ENCODE measurements at regions of chr1 and their contacts with region 1.

Region 1: GRCh38 chr1:16078925-16079656 is 5.6 kb upstream of the FAM131C start:
- DNase-seq: peak; percentile 84
- H3K4me3 ChIP-seq: peak overlapping the region in 1 of 2 experiments; percentile 18; a peak in 1 of 4 replicates
- H3K27ac ChIP-seq: no peak overlapping the region; a peak in 1 of 4 replicates
- H3K4me1 ChIP-seq: peaks cover 15 to 17% of the 10 kb centered on the region in 2 experiments; a peak in 3 of 4 replicates
- H3K27me3 ChIP-seq: no peaks in the 10 kb centered on the region
- CTCF ChIP-seq: peak; percentile 93
- EP300 ChIP-seq: no peak
- RAD21 ChIP-seq: peak; percentile 98

Region 2: DNA sequence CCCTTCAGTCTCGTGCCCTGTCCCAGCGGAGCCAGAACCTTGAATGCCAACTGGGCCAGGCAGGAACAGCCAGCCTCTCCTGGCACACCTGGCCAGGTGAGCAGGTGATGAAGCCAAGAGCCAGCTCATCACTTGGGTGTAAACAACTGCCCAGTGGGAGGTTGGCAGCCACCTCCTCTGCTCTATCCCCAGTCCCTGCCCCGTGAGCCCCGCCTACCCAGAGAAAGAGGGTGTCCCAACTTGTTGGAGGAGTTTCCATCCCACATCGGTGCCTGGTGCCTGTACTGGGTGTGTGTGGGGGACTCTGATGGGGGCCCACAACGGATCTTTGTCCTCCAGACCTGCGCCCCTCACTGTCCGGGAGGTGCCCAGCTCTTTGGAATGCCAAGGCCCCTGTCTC is 12.2 kb after region 1 on chr1:
- CTCF ChIA-PET with region 1: interaction called, 22 read pairs
- POLR2A ChIA-PET with region 1: no interaction called
- DNase-seq: no peak
- H3K4me3 ChIP-seq: no peak overlapping the region
- H3K27ac ChIP-seq: no peak overlapping the region
- H3K4me1 ChIP-seq: peaks cover 0 to 3% of the 10 kb centered on the region in 2 experiments; a peak in 1 of 4 replicates
- H3K27me3 ChIP-seq: no peaks in the 10 kb centered on the region
- CTCF ChIP-seq: no peak
- EP300 ChIP-seq: no peak
- RAD21 ChIP-seq: no peak

Region 3: DNA sequence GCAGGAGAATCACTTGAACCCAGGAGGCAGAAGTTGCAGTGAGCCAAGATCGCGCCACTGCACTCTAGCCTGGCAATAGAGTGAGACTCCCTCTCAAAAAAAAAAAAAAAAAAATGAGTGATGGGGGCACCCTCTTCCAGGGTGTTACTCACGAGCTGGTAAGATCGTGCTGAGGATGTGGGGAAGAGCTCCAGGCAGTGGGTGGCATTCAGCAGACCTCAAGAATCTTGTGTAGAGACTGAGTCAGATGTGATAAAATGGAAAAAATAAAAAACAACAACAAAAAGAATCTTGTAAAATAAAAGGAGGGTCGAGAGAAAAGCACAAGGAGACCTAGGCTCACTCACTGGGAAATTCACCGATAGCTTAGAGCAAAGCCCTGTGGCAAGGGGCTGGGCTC is 38.3 kb after region 1 on chr1:
- CTCF ChIA-PET with region 1: interaction called, 13 read pairs
- POLR2A ChIA-PET with region 1: no interaction called
- DNase-seq: no peak
- H3K4me3 ChIP-seq: no peak overlapping the region
- H3K27ac ChIP-seq: no peak overlapping the region
- H3K4me1 ChIP-seq: peaks cover 10 to 14% of the 10 kb centered on the region in 2 experiments; a peak in 3 of 4 replicates
- H3K27me3 ChIP-seq: no peaks in the 10 kb centered on the region
- CTCF ChIP-seq: no peak
- EP300 ChIP-seq: no peak
- RAD21 ChIP-seq: no peak

Region 4: GRCh38 chr1:16187748-16188401 is 108.8 kb after region 1 on chr1:
- CTCF ChIA-PET with region 1: interaction called, 513 read pairs
- POLR2A ChIA-PET with region 1: interaction called, 12 read pairs
- DNase-seq: peak; percentile 86
- H3K4me3 ChIP-seq: peak overlapping the region in 1 of 2 experiments; percentile 7; a peak in 1 of 4 replicates
- H3K27ac ChIP-seq: no peak overlapping the region
- H3K4me1 ChIP-seq: peaks cover 0 to 26% of the 10 kb centered on the region in 2 experiments; a peak in 2 of 4 replicates
- H3K27me3 ChIP-seq: no peaks in the 10 kb centered on the region
- CTCF ChIP-seq: peak; percentile 98
- EP300 ChIP-seq: no peak
- RAD21 ChIP-seq: peak; percentile 99

Region 5: DNA sequence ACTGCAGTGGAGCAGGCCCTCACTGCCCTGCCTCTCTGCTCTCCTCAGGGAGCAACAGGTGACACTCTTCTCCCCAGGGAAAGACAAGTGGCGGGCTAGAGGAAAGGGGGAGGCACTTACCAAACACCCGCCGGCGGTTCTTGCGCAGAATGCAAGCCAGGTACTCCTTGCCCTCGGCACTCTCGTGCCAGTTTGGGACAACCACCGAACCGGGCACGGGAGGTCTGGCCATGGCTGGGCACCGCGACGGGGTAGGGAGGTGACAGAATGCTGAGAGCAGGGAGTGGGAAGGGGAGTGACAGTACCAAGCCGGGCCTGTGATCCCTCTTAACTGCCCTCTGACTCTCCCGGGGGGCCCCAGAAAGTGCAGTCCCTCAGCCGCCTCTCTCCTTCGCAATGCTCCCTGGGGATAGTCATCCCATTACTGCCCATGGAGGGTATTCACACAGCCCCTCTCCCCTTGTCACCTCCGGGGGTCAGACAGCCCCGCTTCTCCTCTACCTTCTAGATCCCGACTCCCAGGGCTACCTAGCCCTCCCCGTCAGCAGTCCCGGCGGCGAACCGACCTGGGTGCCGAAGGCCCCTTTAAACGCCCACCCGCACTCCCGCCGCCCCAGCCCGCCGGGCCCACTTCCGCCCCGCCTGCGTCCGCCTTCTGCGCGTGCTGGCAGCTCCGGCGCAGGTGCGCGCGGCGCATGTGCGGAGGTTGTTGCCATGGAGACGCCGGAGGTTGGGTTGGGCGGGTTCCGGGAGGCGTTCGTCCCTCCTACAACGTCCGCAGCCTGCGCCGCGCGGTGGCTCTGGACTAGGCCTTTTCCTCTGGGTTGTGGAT is 157.6 kb after region 1 on chr1 and contains the start of gene CPLANE2:
- CTCF ChIA-PET with region 1: interaction called, 94 read pairs
- POLR2A ChIA-PET with region 1: no interaction called
- DNase-seq: peak; percentile 97
- H3K4me3 ChIP-seq: peak within 1 kb of the TSS; percentile 69 to 92
- H3K27ac ChIP-seq: peak within 1 kb of the TSS; percentile 87 to 92
- H3K4me1 ChIP-seq: peaks cover 6 to 22% of the 10 kb centered on the region in 2 experiments
- H3K27me3 ChIP-seq: no peaks in the 10 kb centered on the region
- CTCF ChIP-seq: no peak
- EP300 ChIP-seq: no peak
- RAD21 ChIP-seq: peak; percentile 26; the same call in 1 of the 2 replicates
- polyA plus RNA-seq, gene CPLANE2: 6.5 and 8.6 TPM in 2 replicates

Measured in SK-N-SH (cell line).